CD8-positive, alpha-beta T cell (primary cell): ENCODE measurements at regions of chr1 and their contacts with region 1.

Region 1: DNA sequence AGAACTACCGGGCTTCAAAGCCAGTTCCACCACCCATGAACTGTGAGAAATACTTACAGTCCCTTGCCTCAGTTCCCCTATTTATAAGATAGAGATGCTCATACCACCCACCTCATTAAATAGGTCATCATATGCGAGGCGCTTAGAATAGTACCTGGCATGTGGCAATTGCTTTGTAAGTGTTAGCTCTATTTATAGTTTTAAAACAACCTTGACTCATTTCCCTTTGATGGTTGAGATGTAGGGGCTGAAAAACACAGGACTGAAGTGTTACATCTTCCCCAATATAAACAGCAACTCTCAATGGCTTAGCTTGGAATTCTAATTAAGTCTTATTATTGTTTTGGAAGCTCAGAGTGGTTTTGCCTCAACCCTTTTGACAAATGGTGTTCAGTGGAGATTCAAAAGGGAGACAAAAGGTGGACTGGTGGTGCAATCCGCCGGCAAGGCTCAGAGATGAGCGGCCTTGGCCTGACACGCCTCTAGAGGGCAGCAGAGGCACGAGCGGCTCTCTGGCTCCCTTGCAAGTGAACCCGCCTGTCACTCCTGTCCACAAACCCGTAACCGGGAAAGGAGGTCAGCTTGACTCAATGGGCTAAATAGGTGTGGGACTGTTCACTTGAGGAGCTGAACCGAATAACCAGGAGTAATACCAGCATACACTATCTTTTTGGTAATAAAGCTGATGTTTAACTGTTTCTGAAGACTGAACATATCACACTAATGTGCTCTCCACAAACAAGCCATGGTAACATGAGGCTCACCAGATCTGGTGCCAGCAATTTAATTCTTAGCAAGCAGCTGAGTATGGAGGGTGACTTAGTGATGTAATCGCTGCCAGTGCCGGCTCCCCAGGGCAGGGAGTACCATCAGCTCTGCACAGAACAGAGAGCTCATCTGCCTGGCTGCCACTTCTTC is 19.5 kb upstream of the SMYD2 start:
- DNase-seq: peak; percentile 61 to 89 (median 80)
- ATAC-seq: peak; percentile 96
- H3K4me3 ChIP-seq: no peak overlapping the region
- H3K4me3 Mint-ChIP-seq: no peak overlapping the region
- H3K27ac ChIP-seq: no peak overlapping the region
- H3K27ac Mint-ChIP-seq: no peak overlapping the region
- H3K4me1 ChIP-seq: peaks cover 3% of the 10 kb centered on the region
- H3K4me1 Mint-ChIP-seq: peaks cover 2% of the 10 kb centered on the region
- H3K27me3 ChIP-seq: peaks cover 0 to 2% of the 10 kb centered on the region in 2 experiments
- H3K27me3 Mint-ChIP-seq: peaks cover 63% of the 10 kb centered on the region
- CTCF ChIP-seq: peak; percentile 94

Region 2: DNA sequence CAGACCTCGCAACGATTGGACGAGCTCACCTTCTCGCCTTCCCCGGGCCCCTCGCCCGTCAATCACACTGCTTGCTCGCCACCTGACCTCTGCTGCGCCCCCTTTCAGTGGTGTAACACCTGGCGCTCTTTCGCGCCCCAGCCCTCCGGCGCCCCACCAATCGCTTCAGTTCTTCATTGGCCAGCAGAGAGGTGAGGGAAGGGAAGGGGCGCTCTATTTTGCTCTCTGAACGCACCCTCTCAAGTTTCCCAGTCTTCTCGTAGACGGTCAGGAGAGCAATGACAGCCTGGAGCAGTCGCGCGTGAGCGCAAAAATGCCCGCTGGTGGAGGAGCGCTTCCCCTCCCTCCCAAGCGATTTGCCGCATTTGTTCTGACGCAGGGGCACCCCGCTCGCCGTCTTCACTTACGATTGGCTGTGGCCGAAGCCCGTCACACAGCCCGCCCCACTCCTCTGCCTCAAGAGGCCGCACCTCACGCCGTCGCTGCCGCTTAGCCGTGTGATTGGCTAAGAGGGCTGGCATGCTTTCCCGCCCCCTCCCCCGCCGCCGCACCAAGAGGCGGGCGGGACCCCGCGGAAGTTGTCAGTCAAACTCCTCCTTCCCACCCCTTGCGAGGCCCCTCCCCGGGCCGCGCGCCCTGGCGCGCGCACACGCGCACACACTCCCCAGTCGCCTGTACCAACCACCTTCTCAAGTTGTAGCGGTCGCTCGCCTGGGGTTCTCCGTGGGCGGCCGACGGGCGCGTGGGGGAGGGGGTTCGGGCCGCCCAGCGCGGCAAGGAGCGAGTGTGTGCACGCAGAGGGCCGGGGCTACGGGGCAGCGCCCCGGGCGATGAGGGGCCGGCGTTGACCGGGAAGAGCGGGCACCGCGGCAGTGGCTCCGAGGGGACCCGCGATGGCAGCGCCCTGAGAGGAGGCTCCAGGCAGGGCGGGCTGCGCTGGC is 1976.5 kb before region 1 on chr1 and contains the start of gene PPP2R5A:
- CTCF ChIA-PET with region 1: no interaction called
- POLR2A ChIA-PET with region 1: no interaction called
- intact Hi-C with region 1: no loop called
- DNase-seq: peak; percentile 96 to 100 (median 98)
- ATAC-seq: peak; percentile 85
- H3K4me3 ChIP-seq: peak within 1 kb of the TSS; percentile 89 to 95
- H3K4me3 Mint-ChIP-seq: peak within 1 kb of the TSS; percentile 96
- H3K27ac ChIP-seq: peak within 1 kb of the TSS; percentile 95 to 96
- H3K27ac Mint-ChIP-seq: peak within 1 kb of the TSS; percentile 99
- H3K4me1 ChIP-seq: peaks cover 32% of the 10 kb centered on the region
- H3K4me1 Mint-ChIP-seq: peaks cover 43% of the 10 kb centered on the region
- H3K27me3 ChIP-seq: no peaks in the 10 kb centered on the region
- H3K27me3 Mint-ChIP-seq: no peaks in the 10 kb centered on the region
- CTCF ChIP-seq: no peak
- total RNA-seq, gene PPP2R5A: 57.8 to 60.5 TPM

Region 3: GRCh38 chr1:214241060-214241459 is 20.4 kb before region 1 on chr1:
- CTCF ChIA-PET with region 1: interaction called, 14 read pairs
- POLR2A ChIA-PET with region 1: no interaction called
- intact Hi-C with region 1: no loop called
- DNase-seq: no peak
- ATAC-seq: no peak
- H3K4me3 ChIP-seq: no peak overlapping the region
- H3K4me3 Mint-ChIP-seq: no peak overlapping the region
- H3K27ac ChIP-seq: no peak overlapping the region
- H3K27ac Mint-ChIP-seq: no peak overlapping the region
- H3K4me1 ChIP-seq: no peaks in the 10 kb centered on the region
- H3K4me1 Mint-ChIP-seq: no peaks in the 10 kb centered on the region
- H3K27me3 ChIP-seq: peaks cover 0 to 2% of the 10 kb centered on the region in 2 experiments
- H3K27me3 Mint-ChIP-seq: peaks cover 15% of the 10 kb centered on the region
- CTCF ChIP-seq: no peak

Region 4: DNA sequence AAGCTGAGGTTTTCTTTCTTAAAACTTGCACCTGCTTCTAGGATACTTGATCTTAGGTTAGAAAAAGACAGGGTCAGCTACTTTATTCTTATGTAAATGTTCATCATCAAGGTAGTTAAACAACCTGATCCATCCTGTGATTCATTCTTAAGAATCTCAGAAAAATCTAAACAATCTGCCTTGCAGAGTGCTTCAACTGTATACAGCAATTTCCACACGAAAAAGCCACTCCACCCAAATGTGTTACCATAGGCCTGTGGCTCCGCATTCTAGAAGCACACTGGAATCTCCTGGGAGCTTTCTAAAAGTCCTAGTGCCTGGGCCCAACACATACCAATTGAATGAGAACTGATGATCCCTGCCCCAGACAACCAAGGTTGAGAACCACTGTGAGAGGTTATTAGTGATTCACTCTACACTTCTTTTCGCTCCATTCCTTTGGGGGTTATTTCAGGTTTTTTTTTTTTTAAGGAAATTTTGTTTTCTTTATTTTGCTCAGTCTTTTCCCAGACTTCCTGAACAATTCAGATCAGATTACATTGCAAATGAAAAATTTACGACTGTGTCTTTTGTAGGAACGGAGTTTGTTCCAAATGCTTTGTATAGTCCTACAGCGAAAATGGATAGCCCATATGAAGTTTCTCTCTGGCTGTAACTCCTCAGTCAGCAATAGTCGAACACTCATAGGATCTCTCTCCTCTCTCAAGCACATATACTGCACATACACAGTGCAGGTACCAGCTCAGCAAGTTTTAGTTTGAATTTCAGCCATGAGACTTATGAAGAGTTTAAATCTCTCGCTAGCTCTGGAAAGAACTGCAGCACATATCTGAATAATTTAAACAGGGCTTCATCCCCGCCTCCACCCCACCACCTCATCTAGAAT is 35.6 kb after region 1 on chr1:
- CTCF ChIA-PET with region 1: interaction called, 35 read pairs
- POLR2A ChIA-PET with region 1: interaction called, 4 read pairs
- intact Hi-C with region 1: no loop called
- DNase-seq: no peak
- ATAC-seq: no peak
- H3K4me3 ChIP-seq: no peak overlapping the region
- H3K4me3 Mint-ChIP-seq: no peak overlapping the region
- H3K27ac ChIP-seq: no peak overlapping the region
- H3K27ac Mint-ChIP-seq: no peak overlapping the region
- H3K4me1 ChIP-seq: peaks cover 3% of the 10 kb centered on the region
- H3K4me1 Mint-ChIP-seq: peaks cover 34% of the 10 kb centered on the region
- H3K27me3 ChIP-seq: no peaks in the 10 kb centered on the region
- H3K27me3 Mint-ChIP-seq: no peaks in the 10 kb centered on the region
- CTCF ChIP-seq: no peak

Region 5: DNA sequence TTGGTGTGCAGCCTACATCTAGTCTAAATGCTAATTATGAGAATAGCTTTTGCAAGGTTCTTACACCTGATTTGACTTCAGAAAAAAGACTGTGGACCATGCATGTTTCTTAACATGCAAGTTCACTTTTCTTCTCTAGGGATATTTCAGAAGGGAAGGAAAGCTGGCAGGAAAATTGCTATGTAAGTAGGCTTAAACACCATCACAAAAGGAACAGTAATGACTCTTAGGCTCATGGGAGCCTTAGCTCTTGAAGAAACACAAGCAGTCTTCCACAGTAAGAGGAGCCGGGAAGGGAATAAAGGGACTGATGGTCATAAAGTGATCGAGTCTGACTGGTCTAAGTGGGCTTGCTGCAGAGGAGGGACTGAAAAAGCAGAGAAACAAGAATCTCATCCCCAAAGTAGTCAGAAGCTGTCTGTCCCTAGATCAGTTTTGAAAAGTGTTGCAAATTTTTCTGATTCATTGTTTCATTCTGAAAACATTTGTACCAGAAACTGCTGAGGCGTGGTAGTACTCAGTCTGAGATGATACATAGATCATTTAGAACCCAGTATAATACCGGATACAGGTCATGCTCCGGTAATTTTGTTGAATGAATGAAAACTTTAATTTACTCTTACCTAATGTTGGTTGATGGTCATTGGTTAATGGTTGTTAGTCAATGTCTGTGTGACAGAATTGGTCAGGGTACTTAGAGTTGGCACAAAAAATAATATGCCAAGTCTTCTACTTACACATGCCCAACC is 60.4 kb after region 1 on chr1:
- CTCF ChIA-PET with region 1: interaction called, 681 read pairs
- POLR2A ChIA-PET with region 1: interaction called, 11 read pairs
- intact Hi-C with region 1: no loop called
- DNase-seq: no peak
- ATAC-seq: no peak
- H3K4me3 ChIP-seq: no peak overlapping the region
- H3K4me3 Mint-ChIP-seq: no peak overlapping the region
- H3K27ac ChIP-seq: no peak overlapping the region
- H3K27ac Mint-ChIP-seq: no peak overlapping the region
- H3K4me1 ChIP-seq: no peaks in the 10 kb centered on the region
- H3K4me1 Mint-ChIP-seq: no peaks in the 10 kb centered on the region
- H3K27me3 ChIP-seq: no peaks in the 10 kb centered on the region
- H3K27me3 Mint-ChIP-seq: no peaks in the 10 kb centered on the region
- CTCF ChIP-seq: no peak

Region 6: GRCh38 chr1:214593158-214593557 is 331.7 kb after region 1 on chr1:
- CTCF ChIA-PET with region 1: interaction called, 4 read pairs
- POLR2A ChIA-PET with region 1: no interaction called
- intact Hi-C with region 1: loop called (anchors 2 to 10 kb)
- DNase-seq: no peak
- ATAC-seq: no peak
- H3K4me3 ChIP-seq: no peak overlapping the region
- H3K4me3 Mint-ChIP-seq: no peak overlapping the region
- H3K27ac ChIP-seq: no peak overlapping the region
- H3K27ac Mint-ChIP-seq: no peak overlapping the region
- H3K4me1 ChIP-seq: no peaks in the 10 kb centered on the region
- H3K4me1 Mint-ChIP-seq: no peaks in the 10 kb centered on the region
- H3K27me3 ChIP-seq: peaks cover 0 to 3% of the 10 kb centered on the region in 2 experiments
- H3K27me3 Mint-ChIP-seq: peaks cover 4% of the 10 kb centered on the region
- CTCF ChIP-seq: no peak